Ovary (tissue), 10 donors: ENCODE measurements at regions of chr17 and their contacts with region 1.

Region 1: GRCh38 chr17:42720996-42721583 is 23.8 kb downstream of the EZH1 start:
- DNase-seq: no peak
- H3K4me3 ChIP-seq: no peak overlapping the region
- H3K27ac ChIP-seq: no peak overlapping the region
- H3K4me1 ChIP-seq: no peaks in the 10 kb centered on the region
- H3K27me3 ChIP-seq: no peaks in the 10 kb centered on the region
- CTCF ChIP-seq: peak in 2 of 3 donors; percentile 61 to 75
- EP300 ChIP-seq: no peak
- POLR2A ChIP-seq: no peak

Region 2: GRCh38 chr17:42760652-42761581 is 39.8 kb after region 1 on chr17 and contains the start of gene RAMP2:
- intact Hi-C with region 1: loop called in 3 of 4 experiments (anchors 5 kb)
- DNase-seq: peak; percentile 41 to 69 (median 45)
- H3K4me3 ChIP-seq: peak within 1 kb of the TSS; percentile 39
- H3K27ac ChIP-seq: peak within 1 kb of the TSS in 1 of 2 donors; percentile 14
- H3K4me1 ChIP-seq: peaks cover 4% of the 10 kb centered on the region
- H3K27me3 ChIP-seq: no peaks in the 10 kb centered on the region
- CTCF ChIP-seq: no peak
- EP300 ChIP-seq: no peak
- POLR2A ChIP-seq: no peak
- total RNA-seq, gene RAMP2: 4.4 to 53.7 (median 19.6) TPM

Region 3: DNA sequence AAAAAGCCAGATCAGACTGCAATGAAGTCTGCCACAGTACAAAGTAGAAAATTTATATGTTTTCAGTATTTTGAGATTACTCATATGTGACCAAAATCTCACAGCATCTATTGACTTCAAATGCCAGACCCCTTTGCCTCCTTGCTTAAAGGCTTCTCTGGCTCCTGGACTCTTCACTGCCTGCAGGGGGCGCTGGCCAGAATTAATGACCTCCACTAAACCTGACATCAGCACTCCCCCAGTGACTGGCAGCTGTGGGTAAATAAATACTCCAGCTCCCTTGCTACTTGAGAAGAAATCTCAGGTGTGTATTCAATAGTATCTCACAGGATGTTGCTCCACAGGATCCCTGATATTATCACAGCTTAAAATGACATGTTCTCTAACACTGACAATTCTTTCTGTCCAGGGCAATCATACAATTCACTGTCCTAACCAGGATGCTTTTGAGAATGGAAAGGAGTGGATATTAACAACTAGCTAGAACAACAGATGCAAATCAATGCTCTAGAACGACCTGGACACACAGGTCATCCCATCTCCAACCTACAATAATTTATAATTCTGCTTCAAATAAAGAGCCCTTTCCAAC is 99.0 kb after region 1 on chr17:
- intact Hi-C with region 1: loop called in 2 of 4 experiments (anchors 5 to 10 kb)
- DNase-seq: no peak
- H3K4me3 ChIP-seq: no peak overlapping the region
- H3K27ac ChIP-seq: no peak overlapping the region
- H3K4me1 ChIP-seq: peaks cover 4% of the 10 kb centered on the region
- H3K27me3 ChIP-seq: no peaks in the 10 kb centered on the region
- CTCF ChIP-seq: no peak
- EP300 ChIP-seq: no peak
- POLR2A ChIP-seq: no peak

Region 4: GRCh38 chr17:42827472-42827871 is 106.4 kb after region 1 on chr17:
- intact Hi-C with region 1: loop called in 2 of 4 experiments (anchors 5 to 10 kb)
- DNase-seq: no peak
- H3K4me3 ChIP-seq: no peak overlapping the region
- H3K27ac ChIP-seq: no peak overlapping the region
- H3K4me1 ChIP-seq: peaks cover 4% of the 10 kb centered on the region
- H3K27me3 ChIP-seq: no peaks in the 10 kb centered on the region
- CTCF ChIP-seq: no peak
- EP300 ChIP-seq: no peak
- POLR2A ChIP-seq: no peak

Region 5: DNA sequence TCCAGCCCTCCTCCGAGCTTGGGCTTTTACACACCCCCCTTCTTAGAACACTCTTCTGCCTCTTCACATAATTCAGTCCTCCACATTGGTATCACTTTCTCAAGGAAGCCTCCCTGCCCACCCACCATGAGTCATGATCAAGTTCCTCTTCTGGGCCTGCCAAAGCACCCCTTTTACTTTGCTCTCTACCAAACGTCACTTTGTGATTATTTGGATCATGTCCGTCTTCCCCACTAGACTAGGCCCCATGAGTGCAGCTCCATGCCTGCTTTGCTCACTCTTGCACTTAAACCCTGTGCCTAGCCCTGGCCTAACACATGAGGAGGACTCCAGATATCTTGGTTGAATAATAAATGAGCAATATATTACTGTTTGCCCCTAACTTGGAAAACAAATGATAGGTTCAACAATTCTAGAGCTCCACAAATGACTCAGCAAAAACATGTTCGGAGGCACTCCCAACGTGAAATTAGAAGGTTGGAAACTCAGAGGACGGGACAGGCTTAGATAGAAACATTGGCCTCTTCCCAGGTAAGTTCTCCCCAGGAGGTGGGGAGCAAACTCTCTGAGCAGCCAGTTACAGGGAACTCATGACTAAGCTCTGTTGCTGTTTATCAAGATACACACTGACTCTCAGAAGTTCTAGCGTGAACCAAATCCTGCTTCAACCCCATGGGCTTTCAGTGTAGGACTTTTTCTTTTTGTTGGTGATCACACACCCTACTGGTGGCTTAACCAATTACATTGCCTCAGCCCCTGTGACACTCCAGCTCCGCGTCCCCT is 207.8 kb after region 1 on chr17:
- intact Hi-C with region 1: loop called in 1 of 4 experiments (anchors 5 kb)
- DNase-seq: peak in 3 of 5 donors; percentile 9 to 42 (median 22)
- H3K4me3 ChIP-seq: no peak overlapping the region
- H3K27ac ChIP-seq: peak overlapping the region in 1 of 2 donors; percentile 32
- H3K4me1 ChIP-seq: peaks cover 3% of the 10 kb centered on the region
- H3K27me3 ChIP-seq: no peaks in the 10 kb centered on the region
- CTCF ChIP-seq: peak in 2 of 3 donors; percentile 45 to 52
- EP300 ChIP-seq: no peak
- POLR2A ChIP-seq: no peak

Region 6: GRCh38 chr17:42944211-42944610 is 223.1 kb after region 1 on chr17:
- intact Hi-C with region 1: loop called in 1 of 4 experiments (anchors 10 kb)
- DNase-seq: no peak
- H3K4me3 ChIP-seq: no peak overlapping the region
- H3K27ac ChIP-seq: no peak overlapping the region
- H3K4me1 ChIP-seq: no peaks in the 10 kb centered on the region
- H3K27me3 ChIP-seq: no peaks in the 10 kb centered on the region
- CTCF ChIP-seq: no peak
- EP300 ChIP-seq: no peak
- POLR2A ChIP-seq: no peak